Common myeloid progenitor, CD34-positive (primary cell): ENCODE measurements at regions of chr2 and their contacts with region 1.

Region 1: GRCh38 chr2:218908721-218909619 is 28.3 kb downstream of the WNT10A start:
- DNase-seq: peak; percentile 89 to 95 (median 93)
- H3K4me3 ChIP-seq: peak overlapping the region; percentile 27 to 84 (median 60)
- H3K27ac ChIP-seq: peak overlapping the region in 1 of 2 experiments; percentile 21
- H3K4me1 ChIP-seq: peaks cover 0 to 15% (median 9%) of the 10 kb centered on the region in 4 experiments
- H3K27me3 ChIP-seq: peaks cover 10 to 29% (median 20%) of the 10 kb centered on the region in 5 experiments

Region 2: GRCh38 chr2:218691234-218691633 is 217.7 kb before region 1 on chr2:
- CTCF ChIA-PET with region 1: no interaction called
- POLR2A ChIA-PET with region 1: no interaction called
- DNase-seq: no peak
- H3K4me3 ChIP-seq: no peak overlapping the region
- H3K27ac ChIP-seq: no peak overlapping the region
- H3K4me1 ChIP-seq: no peaks in the 10 kb centered on the region
- H3K27me3 ChIP-seq: no peaks in the 10 kb centered on the region

Region 3: DNA sequence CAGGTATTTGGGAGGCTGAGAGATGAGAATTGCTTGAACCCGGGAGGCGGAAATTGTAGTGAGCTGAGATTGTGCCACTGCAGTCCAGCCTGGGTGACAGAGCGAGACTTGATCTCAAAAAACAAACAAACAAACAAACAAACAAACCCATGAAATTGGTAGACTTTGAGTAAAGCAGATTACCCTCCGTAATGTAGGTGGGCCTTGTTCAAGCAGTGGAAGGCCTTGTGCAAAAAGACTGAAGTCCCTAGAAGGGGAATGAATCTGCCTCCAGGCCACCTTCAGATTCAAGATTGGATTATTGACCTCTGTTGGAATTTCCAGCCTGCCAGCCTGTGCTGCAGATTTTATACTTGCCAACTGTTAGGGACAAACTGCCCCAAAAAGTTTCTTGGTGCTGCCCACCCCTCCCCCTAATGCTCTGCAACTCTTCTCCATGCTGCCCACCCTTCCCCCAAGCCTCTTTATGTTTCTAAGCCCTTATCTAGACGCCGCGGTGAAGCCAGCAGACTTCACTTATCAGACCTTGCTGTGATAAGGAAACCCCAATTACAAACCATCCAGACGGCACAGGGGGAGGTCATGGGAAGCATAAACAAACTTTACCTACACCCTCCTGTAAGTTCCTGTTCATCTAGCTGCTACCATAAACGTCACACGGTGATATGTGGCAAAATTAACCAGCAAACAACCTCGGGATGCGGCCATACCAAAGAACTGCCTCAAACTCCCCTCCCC is 110.0 kb before region 1 on chr2:
- CTCF ChIA-PET with region 1: no interaction called
- POLR2A ChIA-PET with region 1: no interaction called
- DNase-seq: peak in 1 of 3 donors; percentile 28
- H3K4me3 ChIP-seq: no peak overlapping the region
- H3K27ac ChIP-seq: no peak overlapping the region
- H3K4me1 ChIP-seq: no peaks in the 10 kb centered on the region
- H3K27me3 ChIP-seq: peaks cover 6 to 22% (median 11%) of the 10 kb centered on the region in 5 experiments

Region 4: DNA sequence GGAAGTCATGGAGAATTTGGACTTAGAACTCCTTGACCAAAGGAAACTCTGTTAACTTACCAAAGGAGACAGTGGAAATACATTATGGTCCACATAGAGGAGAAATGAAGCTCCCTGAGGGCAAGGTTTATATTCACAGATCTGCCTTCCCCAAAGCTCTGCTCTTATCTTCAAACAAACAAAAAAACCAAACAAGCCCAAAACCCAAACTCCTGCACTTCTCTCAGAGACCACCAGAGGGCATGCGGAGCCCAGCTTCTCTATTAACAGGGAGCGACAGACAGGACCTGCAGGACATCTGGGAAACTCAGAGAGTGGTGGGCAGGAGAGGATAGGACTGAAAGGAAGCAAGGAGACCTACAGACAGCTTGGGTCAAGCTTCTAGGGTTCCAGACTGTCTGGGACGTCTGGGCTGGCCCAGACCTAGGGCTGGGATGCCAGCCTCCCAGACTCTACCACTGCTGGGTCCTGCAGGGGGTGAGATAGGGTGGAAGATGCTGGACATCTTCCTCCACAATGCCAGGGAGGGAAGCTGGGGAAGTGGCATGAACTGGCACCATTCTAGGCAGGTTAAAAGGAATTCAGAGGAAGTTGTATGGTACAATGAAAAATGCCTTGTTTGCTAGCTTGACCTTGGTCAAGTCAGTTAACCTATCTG is 32.3 kb before region 1 on chr2:
- CTCF ChIA-PET with region 1: interaction called, 923 read pairs
- POLR2A ChIA-PET with region 1: no interaction called
- DNase-seq: peak; percentile 68 to 84 (median 74)
- H3K4me3 ChIP-seq: no peak overlapping the region
- H3K27ac ChIP-seq: no peak overlapping the region
- H3K4me1 ChIP-seq: peaks cover 0 to 42% (median 24%) of the 10 kb centered on the region in 4 experiments
- H3K27me3 ChIP-seq: peaks cover 13 to 99% (median 61%) of the 10 kb centered on the region in 5 experiments